ENCODE measurements at regions of chr7 and their contacts with region 1.

Region 1: GRCh38 chr7:19762631-19763030 is 10.8 kb downstream of the TMEM196 start:
- DNase-seq: no peak

Region 2: GRCh38 chr7:19830604-19831003 is 68.0 kb after region 1 on chr7:
- intact Hi-C with region 1: loop called in 1 of 2 experiments (anchors 2 kb)
- DNase-seq: no peak